Right lobe of liver (tissue), 6 donors: ENCODE measurements at regions of chr12 and their contacts with region 1.

Region 1: GRCh38 chr12:53746592-53747092 is 5.1 kb downstream of the CISTR start:
- DNase-seq: peak; percentile 91 to 94 (median 93)
- ATAC-seq: peak; percentile 94 to 98 (median 96)
- H3K4me3 ChIP-seq: no peak overlapping the region
- H3K27ac ChIP-seq: no peak overlapping the region
- H3K4me1 ChIP-seq: peaks cover 0 to 15% (median 6%) of the 10 kb centered on the region in 4 donors
- H3K27me3 ChIP-seq: peaks cover 0 to 15% of the 10 kb centered on the region in 2 donors
- CTCF ChIP-seq: peak; percentile 100
- POLR2A ChIP-seq: no peak

Region 2: GRCh38 chr12:53551889-53552291 is 194.8 kb before region 1 on chr12:
- intact Hi-C with region 1: loop called in 1 of 2 experiments (anchors 10 kb)
- DNase-seq: no peak
- ATAC-seq: peak in 2 of 4 donors; percentile 28 to 52
- H3K4me3 ChIP-seq: no peak overlapping the region
- H3K27ac ChIP-seq: no peak overlapping the region
- H3K4me1 ChIP-seq: no peaks in the 10 kb centered on the region
- H3K27me3 ChIP-seq: no peaks in the 10 kb centered on the region
- CTCF ChIP-seq: no peak
- POLR2A ChIP-seq: no peak

Region 3: GRCh38 chr12:53701518-53702260 is 45.0 kb before region 1 on chr12:
- intact Hi-C with region 1: loop called (anchors 2 to 5 kb)
- DNase-seq: peak; percentile 82 to 83 (median 82)
- ATAC-seq: peak; percentile 96 to 99 (median 98)
- H3K4me3 ChIP-seq: no peak overlapping the region
- H3K27ac ChIP-seq: no peak overlapping the region
- H3K4me1 ChIP-seq: no peaks in the 10 kb centered on the region
- H3K27me3 ChIP-seq: peaks cover 0 to 6% of the 10 kb centered on the region in 2 donors
- CTCF ChIP-seq: peak; percentile 88 to 94 (median 92)
- POLR2A ChIP-seq: no peak